H1 (cell line): ENCODE measurements at regions of chr9 and their contacts with region 1.

Region 1: GRCh38 chr9:86202338-86202882 is 57.0 kb downstream of the C9orf153 start:
- DNase-seq: no peak
- H3K4me3 ChIP-seq: no peak overlapping the region
- H3K27ac ChIP-seq: no peak overlapping the region
- H3K4me1 ChIP-seq: peaks cover 0 to 2% (median 0%) of the 10 kb centered on the region in 4 experiments; a peak in 1 of 7 replicates
- H3K27me3 ChIP-seq: no peaks in the 10 kb centered on the region
- CTCF ChIP-seq: peak; percentile 45 to 83 (median 71)
- EP300 ChIP-seq: no peak
- POLR2A ChIP-seq: no peak
- RAD21 ChIP-seq: peak; percentile 82 to 84

Region 2: GRCh38 chr9:86098824-86099700 is 103.3 kb before region 1 on chr9 and contains the start of gene GOLM1:
- CTCF ChIA-PET with region 1: interaction called, 10 read pairs
- POLR2A ChIA-PET with region 1: no interaction called
- DNase-seq: peak in 1 of 2 experiments; percentile 74
- H3K4me3 ChIP-seq: peak within 1 kb of the TSS; percentile 51 to 97 (median 78)
- H3K27ac ChIP-seq: no peak within 1 kb of the TSS
- H3K4me1 ChIP-seq: peaks cover 0 to 10% (median 1%) of the 10 kb centered on the region in 4 experiments; a peak in 5 of 7 replicates
- H3K27me3 ChIP-seq: peaks cover 0 to 14% (median 6%) of the 10 kb centered on the region in 4 experiments; a peak in 5 of 7 replicates
- CTCF ChIP-seq: peak in 2 of 3 experiments; percentile 14 to 35; a peak in 3 of 4 replicates
- EP300 ChIP-seq: no peak
- POLR2A ChIP-seq: peak; percentile 62
- RAD21 ChIP-seq: peak; percentile 20 to 47; a peak in 3 of 4 replicates
- total RNA-seq, gene GOLM1: 88.9 and 89.4 TPM in 2 replicates

Region 3: DNA sequence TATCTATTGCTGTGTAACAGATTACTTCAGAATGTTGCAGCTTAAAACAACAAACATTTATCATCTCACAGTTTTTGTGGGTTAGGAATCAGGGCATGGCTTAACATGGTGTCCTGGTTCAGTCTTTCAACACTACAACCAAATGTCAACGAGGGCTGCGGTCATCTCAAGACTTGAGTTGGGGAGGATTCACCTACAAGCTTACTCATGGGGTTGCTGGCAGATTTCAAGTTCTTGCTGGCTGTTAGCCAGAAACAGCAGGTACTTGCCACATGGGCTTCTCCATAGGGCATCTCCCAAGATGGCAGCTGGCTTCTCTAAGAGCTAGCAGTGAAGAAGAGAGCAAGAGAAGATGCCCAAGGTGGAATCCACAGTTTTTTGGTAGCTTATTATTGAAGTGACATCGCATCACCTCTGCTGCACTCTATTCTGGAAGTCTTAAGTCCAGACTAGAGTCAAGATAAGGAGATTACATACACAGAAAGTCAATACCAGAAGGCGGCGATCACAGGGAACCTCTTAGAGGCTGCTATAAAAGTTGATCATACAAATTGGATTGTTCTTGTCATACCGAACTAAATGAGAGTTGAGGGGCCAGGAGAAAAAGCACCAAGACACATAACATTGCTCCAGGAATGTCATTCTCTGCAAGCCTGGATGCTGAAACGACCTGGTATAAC is 14.8 kb after region 1 on chr9:
- CTCF ChIA-PET with region 1: interaction called, 27 read pairs
- POLR2A ChIA-PET with region 1: no interaction called
- DNase-seq: no peak
- H3K4me3 ChIP-seq: no peak overlapping the region
- H3K27ac ChIP-seq: no peak overlapping the region
- H3K4me1 ChIP-seq: no peaks in the 10 kb centered on the region
- H3K27me3 ChIP-seq: no peaks in the 10 kb centered on the region
- CTCF ChIP-seq: no peak
- EP300 ChIP-seq: no peak
- POLR2A ChIP-seq: no peak
- RAD21 ChIP-seq: no peak

Region 4: DNA sequence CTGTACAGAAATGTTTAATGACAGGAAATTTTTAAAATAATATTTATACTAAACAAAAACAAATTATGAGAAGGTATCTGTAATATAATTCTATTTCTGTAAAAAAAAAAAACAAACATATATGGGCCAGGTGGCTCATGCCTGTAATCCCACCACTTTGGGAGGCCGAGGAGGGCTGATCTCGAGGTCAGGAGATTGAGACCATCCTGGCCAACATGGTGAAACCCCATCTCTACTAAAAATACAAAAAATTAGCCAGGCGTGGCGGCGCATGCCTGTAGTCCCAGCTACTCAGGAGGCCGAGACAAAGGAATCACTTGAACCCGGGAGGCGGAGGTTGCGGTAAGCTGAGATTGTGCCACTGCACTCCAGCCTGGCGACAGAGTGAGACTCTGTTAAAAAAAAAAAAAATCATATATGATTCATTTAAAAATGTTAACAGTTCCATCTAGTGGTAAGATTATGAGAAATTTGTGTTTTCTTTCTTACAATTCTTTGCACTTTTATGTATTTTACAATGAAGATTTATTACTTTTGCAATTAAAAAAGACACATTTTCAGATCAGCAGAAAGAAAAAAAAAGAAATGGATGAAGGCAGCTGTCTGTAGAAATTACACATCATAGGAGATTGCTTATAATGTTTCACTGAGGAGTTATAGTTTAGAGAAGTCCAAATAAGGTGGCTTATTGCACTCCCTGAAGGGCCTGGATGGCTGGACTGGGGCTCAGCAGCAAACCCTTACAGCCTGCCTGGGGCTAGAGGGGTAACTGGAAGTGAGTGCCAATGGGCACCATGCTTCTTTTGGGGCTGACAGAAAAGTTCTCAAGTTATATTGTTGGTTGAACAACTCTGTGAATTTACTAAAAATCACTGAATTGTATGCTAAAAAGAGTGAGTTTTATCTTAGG is 36.7 kb after region 1 on chr9:
- CTCF ChIA-PET with region 1: interaction called, 22 read pairs
- POLR2A ChIA-PET with region 1: interaction called, 3 read pairs
- DNase-seq: no peak
- H3K4me3 ChIP-seq: no peak overlapping the region
- H3K27ac ChIP-seq: no peak overlapping the region
- H3K4me1 ChIP-seq: no peaks in the 10 kb centered on the region
- H3K27me3 ChIP-seq: no peaks in the 10 kb centered on the region
- CTCF ChIP-seq: no peak
- EP300 ChIP-seq: no peak
- POLR2A ChIP-seq: no peak
- RAD21 ChIP-seq: no peak

Region 5: DNA sequence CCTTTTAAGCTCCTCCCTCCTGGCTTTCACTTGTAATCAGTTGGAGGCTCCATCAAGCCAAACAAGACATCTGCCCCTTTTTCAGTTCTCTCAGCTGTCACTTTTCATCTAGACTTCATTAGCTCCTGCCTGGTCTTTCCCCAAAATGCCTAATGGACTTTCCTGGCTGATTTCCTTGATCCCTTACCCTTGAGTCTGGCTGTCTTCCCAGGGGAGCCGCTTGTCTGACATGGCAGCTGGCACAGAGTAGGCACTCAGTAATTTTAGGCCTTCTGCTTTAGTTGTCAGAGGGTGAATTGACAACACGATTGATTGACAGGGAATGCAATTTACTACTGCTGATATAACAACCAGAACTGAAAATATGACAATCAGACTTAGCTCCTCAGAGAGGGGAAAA is 55.0 kb after region 1 on chr9:
- CTCF ChIA-PET with region 1: interaction called, 17 read pairs
- POLR2A ChIA-PET with region 1: no interaction called
- DNase-seq: no peak
- H3K4me3 ChIP-seq: no peak overlapping the region
- H3K27ac ChIP-seq: no peak overlapping the region
- H3K4me1 ChIP-seq: no peaks in the 10 kb centered on the region
- H3K27me3 ChIP-seq: no peaks in the 10 kb centered on the region
- CTCF ChIP-seq: no peak
- EP300 ChIP-seq: no peak
- POLR2A ChIP-seq: no peak
- RAD21 ChIP-seq: no peak

Region 6: DNA sequence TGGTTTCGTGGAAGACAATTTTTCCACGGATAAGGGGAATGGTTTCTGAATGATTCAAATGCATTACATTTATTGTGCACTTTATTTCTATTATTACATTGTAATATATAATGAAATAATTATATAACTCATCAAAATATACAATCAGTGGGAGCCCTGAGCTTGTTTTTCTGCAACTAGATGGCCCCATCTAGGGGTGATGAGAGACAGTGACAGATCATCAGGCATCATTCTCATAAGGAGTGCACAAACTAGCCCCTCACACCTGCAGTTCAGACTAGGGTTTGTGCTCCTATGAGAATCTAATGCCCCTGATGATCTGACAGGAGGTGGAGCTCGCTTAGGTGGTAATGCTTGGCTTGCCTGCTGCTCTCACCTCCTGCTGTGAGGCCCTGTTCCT is 73.6 kb after region 1 on chr9:
- CTCF ChIA-PET with region 1: interaction called, 21 read pairs
- POLR2A ChIA-PET with region 1: no interaction called
- DNase-seq: no peak
- H3K4me3 ChIP-seq: no peak overlapping the region
- H3K27ac ChIP-seq: no peak overlapping the region
- H3K4me1 ChIP-seq: peaks cover 0 to 6% (median 2%) of the 10 kb centered on the region in 4 experiments; a peak in 3 of 7 replicates
- H3K27me3 ChIP-seq: no peaks in the 10 kb centered on the region
- CTCF ChIP-seq: peak in 2 of 3 experiments; percentile 33 to 37; a peak in 3 of 4 replicates
- EP300 ChIP-seq: no peak
- POLR2A ChIP-seq: no peak
- RAD21 ChIP-seq: peak; percentile 51 to 57

Region 7: GRCh38 chr9:86315086-86315485 is 112.7 kb after region 1 on chr9:
- CTCF ChIA-PET with region 1: no interaction called
- POLR2A ChIA-PET with region 1: no interaction called
- DNase-seq: no peak
- H3K4me3 ChIP-seq: no peak overlapping the region
- H3K27ac ChIP-seq: no peak overlapping the region
- H3K4me1 ChIP-seq: no peaks in the 10 kb centered on the region
- H3K27me3 ChIP-seq: no peaks in the 10 kb centered on the region
- CTCF ChIP-seq: no peak
- EP300 ChIP-seq: no peak
- POLR2A ChIP-seq: no peak
- RAD21 ChIP-seq: no peak

Region 8: GRCh38 chr9:86557063-86557724 is 354.8 kb after region 1 on chr9:
- CTCF ChIA-PET with region 1: no interaction called
- POLR2A ChIA-PET with region 1: no interaction called
- DNase-seq: no peak
- H3K4me3 ChIP-seq: no peak overlapping the region
- H3K27ac ChIP-seq: no peak overlapping the region
- H3K4me1 ChIP-seq: peaks cover 0 to 3% (median 0%) of the 10 kb centered on the region in 4 experiments; a peak in 1 of 7 replicates
- H3K27me3 ChIP-seq: no peaks in the 10 kb centered on the region
- CTCF ChIP-seq: no peak
- EP300 ChIP-seq: no peak
- POLR2A ChIP-seq: no peak
- RAD21 ChIP-seq: peak; percentile 2 to 12; a peak in 2 of 4 replicates